H1 (cell line): ENCODE measurements at regions of chr1 and their contacts with region 1.

Region 1: DNA sequence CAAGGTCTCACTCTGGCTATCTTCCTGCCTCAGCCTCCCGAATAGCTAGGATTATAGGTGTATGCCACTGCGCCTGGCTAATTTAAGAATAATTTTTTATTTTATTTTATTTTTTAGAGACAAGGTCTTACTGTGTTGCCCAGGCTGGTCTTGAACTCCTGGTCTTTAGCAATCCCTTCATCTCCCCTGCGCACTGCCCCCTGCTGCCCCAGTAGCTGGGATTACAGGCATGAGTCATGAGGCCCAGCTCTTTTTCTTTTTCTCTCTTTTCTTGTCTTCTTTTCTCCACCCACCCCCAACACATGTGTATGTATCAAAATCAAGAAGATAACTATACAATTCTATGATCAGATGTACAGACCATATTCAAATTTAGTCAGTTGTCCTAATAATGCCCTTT is 87.2 kb downstream of the PEX14 start:
- DNase-seq: no peak
- H3K4me3 ChIP-seq: no peak overlapping the region
- H3K27ac ChIP-seq: no peak overlapping the region
- H3K4me1 ChIP-seq: no peaks in the 10 kb centered on the region
- H3K27me3 ChIP-seq: no peaks in the 10 kb centered on the region
- CTCF ChIP-seq: peak; percentile 36 to 61 (median 49); a peak in 3 of 4 replicates
- EP300 ChIP-seq: no peak
- POLR2A ChIP-seq: no peak
- RAD21 ChIP-seq: peak; percentile 2 to 43; a peak in 2 of 4 replicates

Region 2: GRCh38 chr1:10380594-10381275 is 181.2 kb before region 1 on chr1:
- CTCF ChIA-PET with region 1: no interaction called
- POLR2A ChIA-PET with region 1: no interaction called
- DNase-seq: no peak
- H3K4me3 ChIP-seq: no peak overlapping the region
- H3K27ac ChIP-seq: no peak overlapping the region
- H3K4me1 ChIP-seq: no peaks in the 10 kb centered on the region
- H3K27me3 ChIP-seq: no peaks in the 10 kb centered on the region
- CTCF ChIP-seq: no peak
- EP300 ChIP-seq: no peak
- POLR2A ChIP-seq: no peak
- RAD21 ChIP-seq: no peak

Region 3: GRCh38 chr1:10540277-10541005 is 21.5 kb before region 1 on chr1:
- CTCF ChIA-PET with region 1: interaction called, 11 read pairs
- POLR2A ChIA-PET with region 1: no interaction called
- DNase-seq: no peak
- H3K4me3 ChIP-seq: no peak overlapping the region
- H3K27ac ChIP-seq: no peak overlapping the region
- H3K4me1 ChIP-seq: peaks cover 6 to 13% (median 9%) of the 10 kb centered on the region in 4 experiments
- H3K27me3 ChIP-seq: no peaks in the 10 kb centered on the region
- CTCF ChIP-seq: no peak
- EP300 ChIP-seq: no peak
- POLR2A ChIP-seq: no peak
- RAD21 ChIP-seq: no peak

Region 4: GRCh38 chr1:10575616-10576015 is 13.7 kb after region 1 on chr1:
- CTCF ChIA-PET with region 1: interaction called, 10 read pairs
- POLR2A ChIA-PET with region 1: interaction called, 5 read pairs
- DNase-seq: no peak
- H3K4me3 ChIP-seq: no peak overlapping the region
- H3K27ac ChIP-seq: no peak overlapping the region
- H3K4me1 ChIP-seq: peaks cover 2 to 9% (median 5%) of the 10 kb centered on the region in 4 experiments; a peak in 6 of 7 replicates
- H3K27me3 ChIP-seq: no peaks in the 10 kb centered on the region
- CTCF ChIP-seq: no peak
- EP300 ChIP-seq: no peak
- POLR2A ChIP-seq: no peak
- RAD21 ChIP-seq: no peak

Region 5: DNA sequence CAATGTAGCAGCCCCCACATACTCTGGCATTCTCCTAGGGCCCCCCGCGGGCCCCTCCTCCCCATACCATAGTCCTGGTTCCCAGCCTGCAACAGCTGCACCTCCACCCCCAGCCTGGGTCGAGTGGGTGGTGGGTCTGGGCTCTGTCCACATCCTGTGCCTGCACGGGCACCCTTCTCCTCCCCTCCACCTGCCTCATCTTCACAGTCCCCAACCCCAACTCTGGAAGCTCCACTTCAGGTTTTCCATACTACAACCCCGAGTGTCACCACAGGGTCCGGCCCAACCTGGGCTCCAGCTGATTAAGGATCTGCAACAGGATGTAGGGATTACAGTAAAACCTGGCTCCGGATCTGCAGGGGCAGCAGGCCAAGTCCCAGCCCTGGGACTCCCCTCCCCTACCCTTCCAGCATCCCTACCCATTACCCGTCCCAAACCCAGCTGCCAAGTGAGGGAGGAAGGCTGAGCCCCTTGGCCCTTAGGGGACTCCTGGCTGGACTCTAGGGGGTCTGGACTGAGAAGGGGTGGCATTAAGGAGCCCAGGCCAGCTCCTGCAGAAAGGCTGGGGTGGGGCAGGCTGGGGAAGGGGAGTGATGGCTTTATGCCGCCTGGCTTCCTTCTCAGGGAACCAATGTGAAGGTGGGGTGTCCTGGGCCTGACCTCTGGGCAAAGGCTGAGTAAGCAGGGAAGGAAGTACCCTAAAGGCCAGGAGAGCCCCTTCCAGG is 117.7 kb after region 1 on chr1:
- CTCF ChIA-PET with region 1: no interaction called
- POLR2A ChIA-PET with region 1: no interaction called
- DNase-seq: peak; percentile 43 to 83
- H3K4me3 ChIP-seq: no peak overlapping the region
- H3K27ac ChIP-seq: no peak overlapping the region
- H3K4me1 ChIP-seq: peaks cover 11 to 51% (median 39%) of the 10 kb centered on the region in 4 experiments
- H3K27me3 ChIP-seq: no peaks in the 10 kb centered on the region
- CTCF ChIP-seq: no peak
- EP300 ChIP-seq: peak in 1 of 2 experiments; percentile 35; a peak in 1 of 3 replicates
- POLR2A ChIP-seq: no peak
- RAD21 ChIP-seq: peak; percentile 23 to 40; a peak in 3 of 4 replicates